PC-3 (cell line): ENCODE measurements at regions of chr19 and their contacts with region 1.

Region 1: GRCh38 chr19:33771384-33772101 is 25.1 kb upstream of the KCTD15 start:
- DNase-seq: peak; percentile 79
- ATAC-seq: peak; percentile 92
- H3K4me3 ChIP-seq: no peak overlapping the region
- H3K27ac ChIP-seq: no peak overlapping the region
- H3K4me1 ChIP-seq: no peaks in the 10 kb centered on the region
- H3K27me3 ChIP-seq: no peaks in the 10 kb centered on the region
- CTCF ChIP-seq: peak; percentile 77

Region 2: GRCh38 chr19:33235269-33235995 is 536.1 kb before region 1 on chr19:
- CTCF ChIA-PET with region 1: no interaction called
- POLR2A ChIA-PET with region 1: no interaction called
- intact Hi-C with region 1: loop called (anchors 2 kb)
- DNase-seq: peak; percentile 87
- ATAC-seq: peak; percentile 88
- H3K4me3 ChIP-seq: no peak overlapping the region; the same call in 1 of the 2 replicates
- H3K27ac ChIP-seq: no peak overlapping the region
- H3K4me1 ChIP-seq: no peaks in the 10 kb centered on the region
- H3K27me3 ChIP-seq: no peaks in the 10 kb centered on the region
- CTCF ChIP-seq: peak; percentile 79

Region 3: GRCh38 chr19:33416307-33417215 is 355.0 kb before region 1 on chr19:
- CTCF ChIA-PET with region 1: interaction called, 3 read pairs
- POLR2A ChIA-PET with region 1: no interaction called
- intact Hi-C with region 1: loop called (anchors 1 kb)
- DNase-seq: peak; percentile 77
- ATAC-seq: peak; percentile 82
- H3K4me3 ChIP-seq: peak overlapping the region; percentile 48; the same call in 1 of the 2 replicates
- H3K27ac ChIP-seq: no peak overlapping the region
- H3K4me1 ChIP-seq: peaks cover 11% of the 10 kb centered on the region; the same call in 1 of the 2 replicates
- H3K27me3 ChIP-seq: no peaks in the 10 kb centered on the region
- CTCF ChIP-seq: peak; percentile 76

Region 4: DNA sequence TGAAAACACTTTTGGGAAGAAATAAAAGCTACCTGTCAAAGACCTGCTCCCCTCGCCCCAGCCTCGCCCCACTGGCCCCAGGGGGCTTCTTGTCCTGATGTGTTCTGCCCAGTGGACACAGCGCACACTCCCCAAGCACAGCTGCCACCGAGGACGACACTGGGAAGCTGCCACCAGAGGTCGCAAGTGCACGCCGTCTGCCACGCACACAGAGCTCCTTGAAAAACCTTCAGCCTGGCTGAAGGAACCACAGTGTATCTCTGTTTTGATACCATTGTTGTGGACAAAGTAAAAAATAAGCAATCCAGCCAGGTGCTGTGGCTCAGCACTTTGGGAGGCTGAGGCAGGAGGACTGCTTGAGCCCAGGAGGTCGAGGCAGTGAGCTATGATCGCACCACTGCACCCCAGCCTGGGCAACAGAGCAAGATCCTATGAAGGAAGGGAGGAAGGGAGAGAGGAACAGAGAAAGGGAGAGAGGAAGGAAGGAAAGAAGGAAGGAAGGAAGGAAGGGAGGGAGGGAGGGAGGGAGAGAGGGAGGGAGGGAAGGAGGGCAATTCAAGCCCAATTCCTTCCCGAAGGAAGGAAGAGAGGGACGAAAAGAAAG is 340.8 kb before region 1 on chr19:
- CTCF ChIA-PET with region 1: interaction called, 5 read pairs
- POLR2A ChIA-PET with region 1: no interaction called
- intact Hi-C with region 1: loop called (anchors 1 kb)
- DNase-seq: peak; percentile 71
- ATAC-seq: peak; percentile 97
- H3K4me3 ChIP-seq: no peak overlapping the region
- H3K27ac ChIP-seq: no peak overlapping the region
- H3K4me1 ChIP-seq: no peaks in the 10 kb centered on the region
- H3K27me3 ChIP-seq: no peaks in the 10 kb centered on the region
- CTCF ChIP-seq: peak; percentile 74

Region 5: GRCh38 chr19:33683841-33684535 is 87.6 kb before region 1 on chr19:
- CTCF ChIA-PET with region 1: no interaction called
- POLR2A ChIA-PET with region 1: no interaction called
- intact Hi-C with region 1: no loop called
- DNase-seq: peak; percentile 46
- ATAC-seq: peak; percentile 78
- H3K4me3 ChIP-seq: no peak overlapping the region
- H3K27ac ChIP-seq: no peak overlapping the region
- H3K4me1 ChIP-seq: no peaks in the 10 kb centered on the region
- H3K27me3 ChIP-seq: peaks cover 19% of the 10 kb centered on the region
- CTCF ChIP-seq: no peak

Region 6: GRCh38 chr19:33868788-33869412 is 97.4 kb after region 1 on chr19:
- CTCF ChIA-PET with region 1: no interaction called
- POLR2A ChIA-PET with region 1: no interaction called
- intact Hi-C with region 1: no loop called
- DNase-seq: no peak
- ATAC-seq: no peak
- H3K4me3 ChIP-seq: no peak overlapping the region
- H3K27ac ChIP-seq: no peak overlapping the region
- H3K4me1 ChIP-seq: no peaks in the 10 kb centered on the region
- H3K27me3 ChIP-seq: no peaks in the 10 kb centered on the region
- CTCF ChIP-seq: no peak